H1 (cell line): ENCODE measurements at regions of chr1 and their contacts with region 1.

Region 1: GRCh38 chr1:201299968-201300367 is 16.7 kb downstream of the PKP1 start:
- DNase-seq: no peak
- H3K4me3 ChIP-seq: no peak overlapping the region
- H3K27ac ChIP-seq: no peak overlapping the region
- H3K4me1 ChIP-seq: peaks cover 0 to 5% (median 2%) of the 10 kb centered on the region in 4 experiments; a peak in 3 of 7 replicates
- H3K27me3 ChIP-seq: no peaks in the 10 kb centered on the region; a peak in 1 of 7 replicates
- CTCF ChIP-seq: no peak
- EP300 ChIP-seq: no peak
- POLR2A ChIP-seq: no peak
- RAD21 ChIP-seq: no peak

Region 2: DNA sequence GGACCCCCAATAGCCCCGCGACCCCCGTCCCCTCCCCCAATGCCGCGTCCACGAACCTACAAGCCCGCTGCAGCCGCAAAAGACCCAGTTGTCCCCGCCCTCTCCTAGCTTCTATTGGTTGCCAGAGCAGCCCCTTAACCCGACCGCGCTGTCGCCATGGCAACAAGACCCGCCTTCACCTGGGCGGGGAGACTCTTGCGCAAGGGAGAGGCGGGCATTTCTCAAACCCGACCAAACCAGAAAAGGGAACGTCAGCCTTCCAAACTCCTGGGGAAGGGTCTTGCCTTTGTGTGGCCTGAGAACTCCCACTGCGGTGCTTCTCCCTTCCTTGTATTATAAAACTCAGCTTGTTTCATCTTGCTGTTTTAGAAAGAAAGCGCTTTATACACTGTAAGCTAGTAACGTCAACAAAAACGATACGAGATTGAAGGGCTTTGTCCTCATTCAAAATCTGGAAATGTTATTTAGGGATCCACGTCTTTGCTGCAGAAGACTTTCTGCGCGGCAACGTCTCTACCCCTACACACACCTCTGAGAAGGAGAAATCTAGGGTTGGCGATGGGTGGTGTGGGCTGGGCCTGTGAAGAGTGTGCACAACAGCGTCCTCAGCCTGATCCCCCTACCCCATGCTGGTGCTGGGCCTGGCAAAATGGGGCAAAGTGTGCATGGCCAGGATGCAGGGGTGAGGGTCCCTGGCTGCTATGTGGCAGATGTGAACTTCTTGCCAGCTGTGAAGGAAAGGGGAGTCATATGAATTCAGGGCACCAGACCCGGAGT is 145.4 kb before region 1 on chr1 and contains the start of gene TMEM9:
- CTCF ChIA-PET with region 1: no interaction called
- POLR2A ChIA-PET with region 1: no interaction called
- DNase-seq: peak; percentile 92 to 99
- H3K4me3 ChIP-seq: peak within 1 kb of the TSS; percentile 80 to 94 (median 82)
- H3K27ac ChIP-seq: peak within 1 kb of the TSS; percentile 74; the same call in 1 of the 2 replicates
- H3K4me1 ChIP-seq: peaks cover 0 to 13% (median 7%) of the 10 kb centered on the region in 4 experiments; a peak in 6 of 7 replicates
- H3K27me3 ChIP-seq: no peaks in the 10 kb centered on the region; a peak in 1 of 7 replicates
- CTCF ChIP-seq: no peak
- EP300 ChIP-seq: no peak
- POLR2A ChIP-seq: peak; percentile 20 to 67; a peak in 1 of 3 replicates
- RAD21 ChIP-seq: no peak
- total RNA-seq, gene TMEM9: 79.9 and 83.2 TPM in 2 replicates

Region 3: DNA sequence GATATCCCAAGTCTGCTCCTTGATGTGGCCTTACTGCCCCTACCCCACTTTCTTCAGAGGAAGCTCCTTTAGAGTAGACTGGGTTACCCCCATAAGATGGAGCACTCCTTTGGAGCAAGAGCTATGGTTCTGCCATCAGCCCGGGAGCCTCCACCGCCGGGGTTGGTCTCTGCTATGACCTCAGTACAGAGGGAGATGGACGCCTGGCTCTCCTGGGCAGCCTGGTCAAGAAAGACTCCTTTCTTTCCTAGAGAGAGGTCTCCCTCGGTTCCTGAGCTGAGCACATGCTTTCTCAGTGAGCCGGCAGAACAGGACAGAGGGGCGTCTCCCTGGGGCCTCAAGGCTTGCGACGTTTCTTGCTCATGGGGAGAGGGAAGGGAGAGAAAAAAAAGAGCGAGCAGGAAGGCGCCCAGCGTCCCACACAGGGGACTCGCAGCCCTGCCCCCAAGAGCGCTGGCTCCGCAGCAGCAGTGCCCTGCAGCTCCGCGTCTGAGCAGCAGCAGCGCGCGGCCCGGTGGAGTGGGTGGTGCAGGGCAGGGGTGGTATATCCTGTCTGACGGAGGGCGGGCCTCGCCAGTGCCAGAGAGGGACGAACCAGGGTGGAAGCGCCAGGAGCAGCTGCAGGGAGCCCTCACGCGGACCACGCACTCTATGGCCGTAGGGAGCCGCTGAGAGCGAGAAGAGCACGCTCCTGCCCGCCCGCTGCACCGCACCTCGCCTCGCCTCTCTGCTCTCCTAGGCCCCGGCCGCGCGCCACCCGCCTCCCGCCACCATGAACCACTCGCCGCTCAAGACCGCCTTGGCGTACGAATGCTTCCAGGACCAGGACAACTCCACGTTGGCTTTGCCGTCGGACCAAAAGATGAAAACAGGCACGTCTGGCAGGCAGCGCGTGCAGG is 16.8 kb before region 1 on chr1 and contains the start of gene PKP1:
- CTCF ChIA-PET with region 1: interaction called, 35 read pairs
- POLR2A ChIA-PET with region 1: interaction called, 5 read pairs
- DNase-seq: peak in 1 of 2 experiments; percentile 79
- H3K4me3 ChIP-seq: peak within 1 kb of the TSS in 3 of 4 experiments; percentile 3 to 41 (median 16); a peak in 3 of 8 replicates
- H3K27ac ChIP-seq: no peak within 1 kb of the TSS
- H3K4me1 ChIP-seq: peaks cover 0 to 9% (median 9%) of the 10 kb centered on the region in 4 experiments; a peak in 5 of 7 replicates
- H3K27me3 ChIP-seq: peaks cover 15 to 31% (median 30%) of the 10 kb centered on the region in 4 experiments
- CTCF ChIP-seq: no peak
- EP300 ChIP-seq: no peak
- POLR2A ChIP-seq: no peak
- RAD21 ChIP-seq: no peak
- total RNA-seq, gene PKP1: 0.88 and 0.95 TPM in 2 replicates

Region 4: DNA sequence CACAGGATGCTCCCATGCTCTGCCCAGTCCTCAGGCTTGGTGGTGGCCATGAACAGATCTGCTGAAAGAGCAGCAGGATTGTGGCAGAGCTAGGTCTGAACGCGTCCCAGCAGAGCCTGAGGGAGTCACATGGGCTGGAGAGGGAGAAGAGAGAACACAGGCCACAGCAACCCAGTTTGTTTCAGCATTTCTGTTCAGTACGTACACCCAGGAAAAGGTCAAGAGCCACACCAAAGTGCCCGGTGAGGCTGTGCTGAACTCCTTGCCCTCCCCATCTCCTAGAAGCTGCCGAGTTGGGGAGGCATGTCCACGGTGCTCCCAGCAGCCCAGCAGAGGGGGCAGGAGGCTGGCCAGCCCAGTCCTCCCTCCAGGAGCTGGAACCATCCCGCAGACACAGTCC is 11.2 kb before region 1 on chr1:
- CTCF ChIA-PET with region 1: interaction called, 35 read pairs
- POLR2A ChIA-PET with region 1: interaction called, 5 read pairs
- DNase-seq: no peak
- H3K4me3 ChIP-seq: no peak overlapping the region
- H3K27ac ChIP-seq: no peak overlapping the region
- H3K4me1 ChIP-seq: peaks cover 0 to 6% (median 0%) of the 10 kb centered on the region in 4 experiments; a peak in 4 of 7 replicates
- H3K27me3 ChIP-seq: peaks cover 4 to 11% (median 10%) of the 10 kb centered on the region in 4 experiments
- CTCF ChIP-seq: peak in 1 of 3 experiments; percentile 23; a peak in 1 of 4 replicates
- EP300 ChIP-seq: no peak
- POLR2A ChIP-seq: no peak
- RAD21 ChIP-seq: no peak; a peak in 1 of 4 replicates

Region 5: DNA sequence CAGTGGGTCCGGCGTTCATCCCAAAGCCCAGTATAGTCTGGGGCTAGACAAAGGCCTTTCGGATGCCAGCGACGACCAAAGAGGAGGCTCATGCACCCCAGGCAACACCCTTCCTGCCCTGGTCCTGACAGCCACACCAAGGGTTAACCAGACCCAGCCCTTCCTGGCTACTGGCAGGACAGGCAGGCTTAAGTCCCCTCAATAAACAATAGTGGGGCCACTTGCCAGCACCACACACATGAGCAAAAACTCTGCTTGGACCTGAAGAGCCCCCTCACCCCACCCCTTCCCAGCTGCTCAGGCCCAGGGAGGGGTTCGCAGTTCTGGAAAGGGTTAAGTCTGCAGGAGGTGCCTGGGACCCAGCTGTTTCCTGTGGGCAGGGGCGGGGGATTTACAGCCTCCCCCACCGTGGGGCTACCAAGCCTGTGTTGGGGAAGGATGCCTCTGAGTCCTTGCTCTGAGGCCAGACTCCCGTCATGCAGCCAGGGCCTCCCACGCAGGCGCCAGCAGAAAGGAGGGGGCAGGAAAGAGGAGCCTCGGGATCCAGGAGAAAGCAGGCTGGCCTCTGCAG is 150.8 kb after region 1 on chr1:
- CTCF ChIA-PET with region 1: no interaction called
- POLR2A ChIA-PET with region 1: no interaction called
- DNase-seq: no peak
- H3K4me3 ChIP-seq: no peak overlapping the region
- H3K27ac ChIP-seq: no peak overlapping the region
- H3K4me1 ChIP-seq: peaks cover 4 to 20% (median 14%) of the 10 kb centered on the region in 4 experiments
- H3K27me3 ChIP-seq: no peaks in the 10 kb centered on the region; a peak in 1 of 7 replicates
- CTCF ChIP-seq: no peak
- EP300 ChIP-seq: no peak
- POLR2A ChIP-seq: no peak
- RAD21 ChIP-seq: no peak